Calu3 (cell line): ENCODE measurements at regions of chr16 and their contacts with region 1.

Region 1: DNA sequence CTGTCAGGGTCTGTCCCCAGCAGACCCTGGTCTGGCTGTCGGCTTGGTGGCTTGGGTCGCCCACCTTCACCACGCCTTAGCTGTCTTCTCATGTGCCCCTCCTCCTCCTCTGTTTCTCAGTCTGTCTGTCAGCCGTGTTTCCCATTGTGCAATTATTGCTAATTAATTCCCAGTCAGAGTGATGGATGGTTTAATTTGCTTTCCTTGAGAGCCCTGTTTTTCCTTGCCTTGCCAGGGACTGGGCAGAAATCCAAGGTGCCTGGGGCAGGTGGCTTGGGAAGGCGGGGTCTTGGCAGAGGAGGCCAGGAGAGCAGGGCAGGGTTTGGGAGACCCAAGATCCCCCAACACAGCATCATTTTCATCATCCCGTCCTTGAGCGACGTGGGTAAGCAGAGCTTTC is 21.2 kb downstream of the NECAB2 start:
- DNase-seq: peak; percentile 34
- H3K4me3 Mint-ChIP-seq: peak overlapping the region; percentile 34
- H3K27ac Mint-ChIP-seq: no peak overlapping the region
- H3K4me1 Mint-ChIP-seq: peaks cover 36% of the 10 kb centered on the region
- H3K27me3 Mint-ChIP-seq: peaks cover 35% of the 10 kb centered on the region
- CTCF ChIP-seq: no peak

Region 2: DNA sequence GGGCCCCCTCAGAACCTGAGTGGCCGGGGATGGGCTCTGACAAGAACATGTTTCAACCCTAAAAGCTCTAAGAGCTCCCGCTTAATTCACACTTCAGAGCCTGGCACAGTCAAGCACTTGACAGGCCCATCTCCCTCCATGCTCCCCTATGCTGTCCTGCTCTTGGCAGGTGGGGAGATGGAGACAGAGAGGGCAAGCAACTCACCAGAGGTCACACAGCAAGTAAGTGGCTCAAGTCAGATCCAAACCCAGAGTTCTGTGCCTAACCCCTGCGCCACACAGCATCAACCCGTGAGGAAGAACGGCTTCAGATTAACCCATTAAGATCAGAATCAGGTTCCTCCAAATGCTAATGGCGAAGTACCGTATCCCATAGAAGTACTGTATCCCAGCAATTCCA is 15.2 kb after region 1 on chr16:
- CTCF ChIA-PET with region 1: interaction called, 10 read pairs
- intact Hi-C with region 1: no loop called
- DNase-seq: no peak
- H3K4me3 Mint-ChIP-seq: no peak overlapping the region
- H3K27ac Mint-ChIP-seq: no peak overlapping the region
- H3K4me1 Mint-ChIP-seq: no peaks in the 10 kb centered on the region
- H3K27me3 Mint-ChIP-seq: peaks cover 69% of the 10 kb centered on the region
- CTCF ChIP-seq: no peak

Region 3: GRCh38 chr16:84096115-84097012 is 107.1 kb after region 1 on chr16:
- CTCF ChIA-PET with region 1: no interaction called
- intact Hi-C with region 1: no loop called
- DNase-seq: no peak
- H3K4me3 Mint-ChIP-seq: no peak overlapping the region
- H3K27ac Mint-ChIP-seq: no peak overlapping the region
- H3K4me1 Mint-ChIP-seq: peaks cover 9% of the 10 kb centered on the region
- H3K27me3 Mint-ChIP-seq: no peaks in the 10 kb centered on the region
- CTCF ChIP-seq: no peak